Head of caudate nucleus (tissue), 42 donors: ENCODE measurements at regions of chr15 and their contacts with region 1.

Region 1: GRCh38 chr15:68584756-68585573 is 6.2 kb downstream of the CORO2B start:
- DNase-seq: peak in 14 of 42 donors; percentile 17 to 71 (median 56)

Region 2: GRCh38 chr15:68469162-68470048 is 115.6 kb before region 1 on chr15:
- intact Hi-C with region 1: no loop called
- DNase-seq: no peak

Region 3: GRCh38 chr15:68614286-68615035 is 29.5 kb after region 1 on chr15:
- intact Hi-C with region 1: loop called (anchors 5 kb)
- DNase-seq: peak; percentile 88 to 99 (median 96)